Spleen (tissue), 13 donors: ENCODE measurements at regions of chr5 and their contacts with region 1.

Region 1: DNA sequence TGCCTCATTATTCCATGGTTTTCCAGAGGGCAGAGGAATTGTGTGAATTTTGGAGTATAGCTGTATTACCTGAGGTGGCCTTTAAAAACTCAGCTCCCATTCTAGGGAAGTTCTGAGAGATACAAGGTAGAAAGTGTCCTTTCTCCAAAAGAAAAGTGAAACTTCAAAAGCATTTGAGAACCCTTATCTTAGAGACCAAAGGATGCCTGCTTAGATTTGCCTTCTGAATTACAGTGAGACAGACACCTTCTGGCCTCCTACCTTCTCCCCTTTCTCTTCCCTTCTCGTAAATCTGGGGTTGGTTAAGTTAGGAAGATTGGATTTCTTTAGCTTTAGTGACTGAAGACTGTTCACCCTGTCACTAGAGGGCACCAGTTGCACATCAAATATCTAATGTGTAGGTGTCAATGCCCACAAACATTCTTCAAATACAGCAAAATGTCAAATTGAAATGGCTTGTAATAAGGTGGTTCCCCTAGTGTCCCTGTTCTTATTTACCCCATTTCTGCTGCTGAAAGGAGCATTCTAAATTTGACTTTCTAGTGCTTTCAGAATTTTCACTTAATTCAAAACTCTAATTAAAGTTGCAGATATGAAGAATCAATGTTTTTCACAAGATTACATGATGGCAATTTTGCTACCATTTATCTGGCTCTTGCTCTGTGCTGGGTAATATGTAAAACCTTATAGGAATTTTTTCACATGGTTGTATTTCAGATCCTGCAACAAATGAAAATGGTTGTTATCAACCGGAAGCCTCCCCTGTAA is 46.7 kb downstream of the PRRC1 start:
- DNase-seq: no peak
- H3K4me3 ChIP-seq: no peak overlapping the region
- H3K27ac ChIP-seq: no peak overlapping the region
- H3K4me1 ChIP-seq: peaks cover 0 to 18% (median 0%) of the 10 kb centered on the region in 6 donors
- H3K27me3 ChIP-seq: peaks cover 0 to 4% (median 0%) of the 10 kb centered on the region in 7 donors
- CTCF ChIP-seq: peak; percentile 30 to 69 (median 61)
- POLR2A ChIP-seq: no peak

Region 2: DNA sequence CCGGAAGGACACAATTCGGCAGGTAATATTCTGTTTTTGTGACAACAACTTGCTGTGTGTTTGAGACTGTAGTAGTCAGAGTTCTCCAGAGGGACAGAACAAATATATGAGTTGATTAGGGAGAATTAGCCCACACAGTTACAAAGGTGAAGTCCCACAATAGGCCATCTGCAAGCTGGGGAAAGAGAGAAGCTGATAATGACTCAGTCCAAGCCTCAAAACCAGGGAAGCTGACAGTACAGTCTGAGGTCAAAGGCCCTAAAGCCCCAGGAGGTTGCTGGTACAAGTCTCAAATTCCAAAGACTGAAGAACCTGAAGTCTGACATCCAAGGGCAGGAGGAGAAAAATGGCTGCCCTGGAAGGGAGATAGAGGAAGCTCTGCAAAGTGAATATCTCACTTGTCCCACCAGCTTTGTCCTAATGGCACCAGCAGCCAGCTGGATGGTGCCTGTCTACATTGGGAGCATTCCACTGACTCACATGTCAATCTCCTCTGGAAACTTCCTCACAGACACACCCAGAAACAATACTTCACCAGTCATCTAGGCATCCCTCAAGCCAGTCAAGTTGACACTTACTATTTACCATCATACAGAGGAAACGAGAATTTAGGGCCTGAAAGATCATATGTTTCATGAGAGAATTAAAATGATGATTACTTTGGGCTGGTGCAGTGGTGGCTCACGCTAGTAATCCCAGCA is 48.4 kb after region 1 on chr5:
- intact Hi-C with region 1: no loop called
- DNase-seq: no peak
- H3K4me3 ChIP-seq: no peak overlapping the region
- H3K27ac ChIP-seq: no peak overlapping the region
- H3K4me1 ChIP-seq: no peaks in the 10 kb centered on the region
- H3K27me3 ChIP-seq: no peaks in the 10 kb centered on the region
- CTCF ChIP-seq: no peak
- POLR2A ChIP-seq: no peak

Region 3: DNA sequence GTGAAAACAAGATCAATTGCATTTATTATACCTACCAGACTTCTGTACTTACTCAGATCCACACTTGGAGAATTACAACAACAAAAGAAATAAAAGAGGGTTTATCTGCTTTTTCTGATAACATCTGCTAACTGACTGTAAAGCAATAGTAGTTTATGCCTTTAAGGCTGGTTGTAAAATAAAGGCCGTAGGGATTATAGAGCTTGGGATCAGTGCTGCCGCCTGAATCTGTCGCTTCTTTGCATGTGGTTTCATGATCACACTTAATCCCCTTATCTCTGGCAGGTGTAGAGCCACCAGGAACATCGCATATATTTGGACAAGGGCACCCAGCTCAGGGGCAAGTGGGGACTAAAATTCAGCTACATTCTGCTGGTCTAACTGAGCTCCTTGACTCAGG is 285.7 kb after region 1 on chr5:
- intact Hi-C with region 1: no loop called
- DNase-seq: no peak
- H3K4me3 ChIP-seq: no peak overlapping the region
- H3K27ac ChIP-seq: no peak overlapping the region
- H3K4me1 ChIP-seq: no peaks in the 10 kb centered on the region
- H3K27me3 ChIP-seq: no peaks in the 10 kb centered on the region
- CTCF ChIP-seq: no peak
- POLR2A ChIP-seq: no peak

Region 4: GRCh38 chr5:127867389-127867788 is 303.2 kb after region 1 on chr5:
- intact Hi-C with region 1: loop called (anchors 10 kb)
- DNase-seq: no peak
- H3K4me3 ChIP-seq: no peak overlapping the region
- H3K27ac ChIP-seq: no peak overlapping the region
- H3K4me1 ChIP-seq: no peaks in the 10 kb centered on the region
- H3K27me3 ChIP-seq: no peaks in the 10 kb centered on the region
- CTCF ChIP-seq: no peak
- POLR2A ChIP-seq: no peak